Activated B cell treated with CpG ODN at 0.5 μM for 24 hours (primary cell): ENCODE measurements at regions of chr7 and their contacts with region 1.

Region 1: GRCh38 chr7:149239345-149240191 is at the start of gene ZNF212:
- DNase-seq: peak; percentile 82
- ATAC-seq: peak; percentile 99
- H3K4me3 Mint-ChIP-seq: peak within 1 kb of the TSS; percentile 91
- H3K27ac Mint-ChIP-seq: peak within 1 kb of the TSS; percentile 76
- H3K4me1 Mint-ChIP-seq: peaks cover 37% of the 10 kb centered on the region
- H3K27me3 Mint-ChIP-seq: no peaks in the 10 kb centered on the region
- CTCF ChIP-seq: no peak
- total RNA-seq, gene ZNF212: 17.0 and 21.0 TPM in 2 replicates

Region 2: GRCh38 chr7:148729984-148730733 is 509.4 kb before region 1 on chr7:
- CTCF ChIA-PET with region 1: no interaction called
- POLR2A ChIA-PET with region 1: no interaction called
- intact Hi-C with region 1: no loop called
- DNase-seq: no peak
- ATAC-seq: no peak
- H3K4me3 Mint-ChIP-seq: no peak overlapping the region
- H3K27ac Mint-ChIP-seq: no peak overlapping the region
- H3K4me1 Mint-ChIP-seq: peaks cover 35% of the 10 kb centered on the region
- H3K27me3 Mint-ChIP-seq: no peaks in the 10 kb centered on the region
- CTCF ChIP-seq: no peak

Region 3: GRCh38 chr7:149028346-149029109 is 211.0 kb before region 1 on chr7 and contains the start of gene PDIA4:
- CTCF ChIA-PET with region 1: no interaction called
- POLR2A ChIA-PET with region 1: no interaction called
- intact Hi-C with region 1: loop called (anchors 10 kb)
- DNase-seq: peak; percentile 99
- ATAC-seq: peak; percentile 87
- H3K4me3 Mint-ChIP-seq: peak within 1 kb of the TSS; percentile 92
- H3K27ac Mint-ChIP-seq: peak within 1 kb of the TSS; percentile 89
- H3K4me1 Mint-ChIP-seq: peaks cover 39% of the 10 kb centered on the region
- H3K27me3 Mint-ChIP-seq: no peaks in the 10 kb centered on the region
- CTCF ChIP-seq: no peak
- total RNA-seq, gene PDIA4: 57.4 and 59.4 TPM in 2 replicates

Region 4: GRCh38 chr7:149195180-149196150 is 44.1 kb before region 1 on chr7 and contains the start of gene ZNF282:
- CTCF ChIA-PET with region 1: interaction called, 3 read pairs
- POLR2A ChIA-PET with region 1: no interaction called
- intact Hi-C with region 1: loop called (anchors 2 kb)
- DNase-seq: peak; percentile 68
- ATAC-seq: peak; percentile 88
- H3K4me3 Mint-ChIP-seq: peak within 1 kb of the TSS; percentile 89
- H3K27ac Mint-ChIP-seq: peak within 1 kb of the TSS; percentile 66
- H3K4me1 Mint-ChIP-seq: peaks cover 31% of the 10 kb centered on the region
- H3K27me3 Mint-ChIP-seq: no peaks in the 10 kb centered on the region
- CTCF ChIP-seq: no peak
- total RNA-seq, gene ZNF282: 21.6 and 21.7 TPM in 2 replicates

Region 5: DNA sequence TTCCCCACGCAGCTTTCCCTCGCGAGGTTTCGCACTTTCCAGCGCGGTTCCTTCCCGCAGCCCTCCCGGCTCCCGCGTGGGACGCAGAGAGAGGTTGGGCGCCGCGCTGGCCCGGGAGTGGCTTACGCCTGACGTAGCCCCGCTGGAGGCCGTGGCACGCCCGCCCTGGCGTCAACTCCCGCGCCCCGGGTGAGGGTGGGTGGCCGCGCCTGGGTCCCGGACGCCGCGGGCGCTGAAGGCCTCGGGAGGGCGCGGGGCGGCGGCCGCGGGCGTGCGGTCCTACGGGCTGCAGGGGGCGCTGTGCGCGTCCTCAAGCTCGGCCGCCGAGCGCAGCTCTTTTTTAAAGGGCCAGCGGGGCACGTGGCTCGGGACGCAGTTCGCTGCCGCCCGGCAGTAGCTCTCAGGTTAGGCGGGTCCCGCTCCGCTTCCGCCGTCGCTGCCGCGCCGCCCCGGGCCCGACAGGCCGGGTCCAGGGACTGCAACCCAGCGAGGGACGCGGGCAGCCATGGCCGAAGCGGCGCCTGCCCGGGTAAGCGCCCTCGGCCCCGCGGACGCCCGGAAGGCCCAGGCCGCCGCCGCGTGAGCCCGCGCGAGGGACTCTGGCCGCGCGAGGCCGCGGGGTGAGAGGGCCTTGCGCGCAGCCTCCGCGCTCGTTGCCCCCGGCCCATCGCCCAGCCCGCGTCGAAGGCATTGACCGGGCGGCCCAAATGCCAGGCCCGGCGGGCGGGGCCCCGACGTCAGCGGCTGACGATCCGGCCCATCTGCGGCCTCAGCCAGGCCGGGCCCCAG is 22.5 kb after region 1 on chr7 and contains the start of gene ZNF783:
- CTCF ChIA-PET with region 1: interaction called, 4 read pairs
- POLR2A ChIA-PET with region 1: interaction called, 13 read pairs
- intact Hi-C with region 1: loop called (anchors 1 kb)
- DNase-seq: peak; percentile 88
- ATAC-seq: peak; percentile 91
- H3K4me3 Mint-ChIP-seq: peak within 1 kb of the TSS; percentile 89
- H3K27ac Mint-ChIP-seq: peak within 1 kb of the TSS; percentile 90
- H3K4me1 Mint-ChIP-seq: peaks cover 23% of the 10 kb centered on the region
- H3K27me3 Mint-ChIP-seq: no peaks in the 10 kb centered on the region
- CTCF ChIP-seq: no peak
- total RNA-seq, gene ZNF783: 28.5 and 34.1 TPM in 2 replicates

Region 6: GRCh38 chr7:149284850-149285626 is 45.5 kb after region 1 on chr7:
- CTCF ChIA-PET with region 1: no interaction called
- POLR2A ChIA-PET with region 1: no interaction called
- intact Hi-C with region 1: loop called (anchors 2 kb)
- DNase-seq: peak; percentile 95
- ATAC-seq: peak; percentile 99
- H3K4me3 Mint-ChIP-seq: peak overlapping the region; percentile 89
- H3K27ac Mint-ChIP-seq: no peak overlapping the region
- H3K4me1 Mint-ChIP-seq: peaks cover 27% of the 10 kb centered on the region
- H3K27me3 Mint-ChIP-seq: no peaks in the 10 kb centered on the region
- CTCF ChIP-seq: no peak

Region 7: GRCh38 chr7:149460493-149461277 is 221.1 kb after region 1 on chr7 and contains the start of gene ZNF777:
- CTCF ChIA-PET with region 1: no interaction called
- POLR2A ChIA-PET with region 1: no interaction called
- intact Hi-C with region 1: loop called (anchors 1 kb)
- DNase-seq: peak; percentile 69
- ATAC-seq: peak; percentile 97
- H3K4me3 Mint-ChIP-seq: peak within 1 kb of the TSS; percentile 87
- H3K27ac Mint-ChIP-seq: peak within 1 kb of the TSS; percentile 65
- H3K4me1 Mint-ChIP-seq: peaks cover 24% of the 10 kb centered on the region
- H3K27me3 Mint-ChIP-seq: peaks cover 9% of the 10 kb centered on the region
- CTCF ChIP-seq: no peak
- total RNA-seq, gene ZNF777: 14.0 and 16.2 TPM in 2 replicates

Region 8: GRCh38 chr7:149742075-149742701 is 502.6 kb after region 1 on chr7:
- CTCF ChIA-PET with region 1: no interaction called
- POLR2A ChIA-PET with region 1: no interaction called
- intact Hi-C with region 1: loop called (anchors 1 kb)
- DNase-seq: peak; percentile 58
- ATAC-seq: peak; percentile 89
- H3K4me3 Mint-ChIP-seq: peak overlapping the region; percentile 76
- H3K27ac Mint-ChIP-seq: no peak overlapping the region
- H3K4me1 Mint-ChIP-seq: peaks cover 10% of the 10 kb centered on the region
- H3K27me3 Mint-ChIP-seq: peaks cover 26% of the 10 kb centered on the region
- CTCF ChIP-seq: peak; percentile 64